GM13976 (cell line): ENCODE measurements at regions of chr2 and their contacts with region 1.

Region 1: DNA sequence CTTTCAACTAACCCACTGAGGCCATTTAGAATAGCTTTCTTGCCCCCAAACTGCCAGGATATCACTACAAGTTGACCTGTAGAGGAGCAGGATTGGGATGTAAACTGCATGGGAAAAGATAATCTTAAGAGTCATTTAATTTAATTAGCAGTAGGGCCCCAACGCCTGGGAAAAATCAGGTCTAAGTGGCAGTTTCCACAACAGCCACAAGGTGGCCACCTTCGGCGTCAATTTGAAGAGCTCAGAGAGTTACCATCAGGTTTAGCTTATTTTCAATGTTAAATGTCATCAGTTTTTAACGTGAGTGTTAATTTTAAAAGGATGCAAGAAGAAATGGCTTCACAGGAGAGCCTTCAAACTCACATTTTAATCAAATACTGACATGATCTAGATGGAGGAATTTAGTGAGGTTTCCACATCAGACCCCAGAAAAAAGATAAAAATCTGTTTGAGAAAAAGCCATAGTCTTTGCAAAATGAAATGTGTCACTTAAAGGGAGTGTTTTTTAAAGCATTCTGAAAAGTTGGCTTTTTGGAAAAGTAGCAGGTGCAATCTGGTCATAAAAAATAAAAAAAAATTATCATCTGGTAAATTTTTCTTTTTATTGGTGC is 77.3 kb upstream of the UPP2 start:
- DNase-seq: peak; percentile 44
- CTCF ChIP-seq: peak; percentile 85

Region 2: GRCh38 chr2:157302492-157303099 is 721.8 kb before region 1 on chr2:
- in situ Hi-C with region 1: loop called (anchors 25 kb)
- DNase-seq: peak; percentile 34
- CTCF ChIP-seq: peak; percentile 59

Region 3: DNA sequence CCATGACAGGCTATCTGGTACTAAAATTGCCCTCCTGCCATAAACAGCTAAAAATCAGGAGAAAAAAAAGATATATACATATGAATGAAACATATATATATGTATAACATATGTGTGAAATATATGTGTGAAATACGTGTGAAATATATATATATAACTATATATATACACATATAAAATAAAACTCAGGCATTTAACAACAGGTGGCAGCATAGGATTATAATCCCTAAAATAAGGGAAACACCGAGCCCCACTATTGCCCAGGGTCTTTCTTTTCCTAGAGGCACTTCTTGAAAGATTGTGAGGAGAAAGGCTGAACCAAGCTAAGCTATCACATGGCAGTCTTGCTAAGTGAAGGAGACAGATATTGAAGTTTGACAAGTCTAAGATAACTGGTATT is 514.6 kb before region 1 on chr2:
- in situ Hi-C with region 1: loop called (anchors 25 kb)
- DNase-seq: no peak
- CTCF ChIP-seq: no peak

Region 4: GRCh38 chr2:157777427-157777826 is 247.0 kb before region 1 on chr2:
- in situ Hi-C with region 1: loop called (anchors 25 kb)
- DNase-seq: peak; percentile 29
- CTCF ChIP-seq: no peak

Region 5: GRCh38 chr2:157866202-157866601 is 158.2 kb before region 1 on chr2:
- in situ Hi-C with region 1: no loop called
- DNase-seq: no peak
- CTCF ChIP-seq: no peak

Region 6: DNA sequence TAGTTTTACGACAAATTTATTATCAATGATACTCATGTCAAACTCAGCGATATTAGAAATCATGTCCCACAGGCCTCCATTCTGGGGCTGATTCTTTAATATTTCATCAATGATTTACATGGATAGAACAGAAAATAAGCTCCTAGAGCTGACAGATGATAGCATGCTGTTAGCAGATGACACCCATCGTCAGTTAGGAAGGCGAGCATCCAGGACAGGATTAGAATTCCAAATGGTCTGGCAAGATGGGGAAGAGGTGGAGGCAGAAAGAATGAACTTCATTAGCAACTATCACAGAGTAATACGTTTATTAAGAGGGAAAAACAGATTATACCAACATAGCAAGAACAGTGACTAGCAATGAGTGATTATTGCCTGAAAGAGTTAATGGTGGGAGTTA is 102.1 kb before region 1 on chr2:
- in situ Hi-C with region 1: no loop called
- DNase-seq: no peak
- CTCF ChIP-seq: no peak

Region 7: GRCh38 chr2:158745044-158745865 is 720.9 kb after region 1 on chr2:
- in situ Hi-C with region 1: loop called (anchors 10 kb)
- DNase-seq: peak; percentile 55
- CTCF ChIP-seq: peak; percentile 33